Endothelial cell of umbilical vein (primary cell): ENCODE measurements at regions of chr21 and their contacts with region 1.

Region 1: DNA sequence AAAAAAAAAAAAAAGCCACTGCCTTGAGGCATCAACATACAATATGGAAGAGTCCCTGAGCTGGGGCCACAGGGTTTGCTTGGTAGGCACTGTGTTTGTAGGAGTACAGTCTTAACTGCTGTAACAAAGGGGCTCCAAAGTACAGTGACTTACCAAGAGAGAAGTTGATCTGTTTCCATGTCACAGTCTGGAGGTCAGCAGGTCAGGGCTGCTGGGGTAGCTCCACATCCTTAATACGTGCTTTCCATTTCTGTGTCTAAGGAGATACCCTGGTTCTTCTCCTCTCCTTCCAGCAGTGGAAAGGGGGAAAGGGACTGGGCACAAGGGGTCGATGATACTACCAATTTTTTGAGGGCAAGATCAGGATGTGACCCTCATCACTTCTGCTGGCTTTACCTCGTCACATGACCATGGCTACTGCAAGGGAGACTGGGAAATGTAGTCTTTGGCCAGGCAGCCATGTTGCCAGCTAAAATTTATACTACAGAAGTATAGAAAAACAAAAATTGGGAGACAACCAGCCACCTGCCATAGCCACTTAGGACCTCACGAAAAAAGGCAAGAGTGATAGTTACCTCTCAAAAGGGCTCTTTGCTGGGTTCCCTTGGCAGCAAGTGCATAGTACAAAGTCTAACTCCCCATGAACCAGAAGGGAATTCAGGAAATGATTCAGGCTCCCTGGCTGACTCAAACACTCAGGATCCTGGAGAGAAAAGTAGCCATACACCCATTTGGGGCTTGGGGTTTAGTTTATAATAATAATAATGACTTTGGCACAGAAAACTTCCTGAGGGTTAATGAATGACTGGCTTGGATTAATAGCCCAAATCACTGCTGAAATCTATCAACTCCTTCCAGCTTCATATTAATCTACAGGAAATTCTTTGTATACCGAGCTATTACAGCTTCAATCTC is 52.7 kb upstream of the ATP5PO start:
- DNase-seq: peak; percentile 97
- H3K4me3 ChIP-seq: peak overlapping the region in 1 of 3 experiments; percentile 10
- H3K27ac ChIP-seq: peak overlapping the region; percentile 84
- H3K4me1 ChIP-seq: peaks cover 36% of the 10 kb centered on the region
- H3K27me3 ChIP-seq: peaks cover 0 to 3% of the 10 kb centered on the region in 2 experiments
- CTCF ChIP-seq: no peak
- POLR2A ChIP-seq: no peak

Region 2: GRCh38 chr21:33767236-33767635 is 201.1 kb before region 1 on chr21:
- CTCF ChIA-PET with region 1: no interaction called
- POLR2A ChIA-PET with region 1: no interaction called
- dilution Hi-C with region 1: no loop called
- intact Hi-C with region 1: loop called (anchors 5 kb)
- DNase-seq: no peak
- H3K4me3 ChIP-seq: no peak overlapping the region
- H3K27ac ChIP-seq: no peak overlapping the region
- H3K4me1 ChIP-seq: peaks cover 33% of the 10 kb centered on the region
- H3K27me3 ChIP-seq: no peaks in the 10 kb centered on the region
- CTCF ChIP-seq: no peak
- POLR2A ChIP-seq: no peak

Region 3: DNA sequence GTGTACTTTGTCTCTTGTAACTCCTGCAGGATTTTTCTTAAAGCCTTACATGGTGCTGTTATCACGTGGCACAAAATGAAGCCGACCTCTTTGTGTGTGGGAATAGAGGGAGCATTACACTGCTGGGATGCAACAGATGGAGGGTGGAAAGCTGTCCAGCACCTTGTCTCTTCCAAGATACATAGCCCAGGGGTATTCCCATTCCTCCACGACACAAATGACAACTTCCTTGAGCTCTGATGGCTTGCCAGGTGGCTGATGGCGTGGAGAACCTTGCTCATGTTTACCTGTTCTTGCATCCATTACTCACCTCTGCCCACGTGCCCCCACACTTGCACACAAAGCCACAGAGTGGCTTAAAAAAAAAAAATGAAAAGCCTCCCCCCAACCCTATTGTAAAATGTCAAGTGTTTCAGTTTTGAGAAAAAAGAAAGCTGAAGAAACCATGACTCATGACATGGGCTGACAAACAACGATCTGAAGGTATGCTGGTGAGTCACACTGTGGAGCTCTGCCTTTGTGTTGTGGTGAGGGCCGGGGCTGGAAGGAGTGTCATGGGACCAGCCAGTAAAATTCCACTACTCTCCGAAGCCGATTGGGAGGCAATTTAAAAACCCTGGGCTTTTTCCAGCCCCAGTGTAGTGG is 20.8 kb before region 1 on chr21:
- CTCF ChIA-PET with region 1: interaction called, 13 read pairs
- POLR2A ChIA-PET with region 1: interaction called, 4 read pairs
- dilution Hi-C with region 1: no loop called
- intact Hi-C with region 1: loop called (anchors 1 kb)
- DNase-seq: peak; percentile 95
- H3K4me3 ChIP-seq: peak overlapping the region in 1 of 3 experiments; percentile 43
- H3K27ac ChIP-seq: peak overlapping the region; percentile 80
- H3K4me1 ChIP-seq: peaks cover 19% of the 10 kb centered on the region
- H3K27me3 ChIP-seq: no peaks in the 10 kb centered on the region
- CTCF ChIP-seq: no peak
- POLR2A ChIP-seq: no peak